Activated CD8-positive, alpha-beta T cell treated with anti-CD3 and anti-CD28 coated beads for 36 hours (primary cell): ENCODE measurements at regions of chr7 and their contacts with region 1.

Region 1: GRCh38 chr7:16564909-16565426 is 38.3 kb downstream of the LRRC72 start:
- DNase-seq: peak; percentile 46
- ATAC-seq: peak; percentile 68
- H3K4me3 Mint-ChIP-seq: no peak overlapping the region
- H3K27ac Mint-ChIP-seq: peak overlapping the region; percentile 55
- H3K4me1 Mint-ChIP-seq: peaks cover 21% of the 10 kb centered on the region
- H3K27me3 Mint-ChIP-seq: peaks cover 4% of the 10 kb centered on the region
- CTCF ChIP-seq: peak; percentile 79

Region 2: GRCh38 chr7:16078076-16078952 is 486.7 kb before region 1 on chr7:
- CTCF ChIA-PET with region 1: interaction called, 33 read pairs
- POLR2A ChIA-PET with region 1: interaction called, 3 read pairs
- intact Hi-C with region 1: loop called (anchors 2 kb)
- DNase-seq: peak; percentile 30
- ATAC-seq: no peak
- H3K4me3 Mint-ChIP-seq: no peak overlapping the region
- H3K27ac Mint-ChIP-seq: no peak overlapping the region
- H3K4me1 Mint-ChIP-seq: no peaks in the 10 kb centered on the region
- H3K27me3 Mint-ChIP-seq: no peaks in the 10 kb centered on the region
- CTCF ChIP-seq: peak; percentile 55

Region 3: DNA sequence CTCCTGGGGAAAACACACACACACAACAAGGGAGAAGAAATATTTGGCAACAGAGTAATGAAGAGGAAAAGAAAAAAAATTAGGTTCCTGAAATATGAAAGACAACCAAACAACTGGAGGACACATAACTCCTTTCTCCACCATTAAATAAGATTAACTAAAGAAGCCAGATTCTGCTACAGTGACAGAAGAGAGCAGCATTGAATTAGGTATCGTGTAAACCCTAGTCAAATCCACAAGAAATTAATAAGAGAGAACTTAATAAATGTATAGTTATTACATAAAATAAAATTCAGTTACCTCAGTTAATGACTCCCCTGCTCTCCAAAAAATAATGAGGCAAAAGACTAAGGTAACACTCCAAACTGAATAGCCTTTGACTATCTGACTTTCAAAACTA is 450.3 kb before region 1 on chr7:
- CTCF ChIA-PET with region 1: interaction called, 3 read pairs
- POLR2A ChIA-PET with region 1: no interaction called
- intact Hi-C with region 1: loop called (anchors 10 kb)
- DNase-seq: no peak
- ATAC-seq: no peak
- H3K4me3 Mint-ChIP-seq: no peak overlapping the region
- H3K27ac Mint-ChIP-seq: no peak overlapping the region
- H3K4me1 Mint-ChIP-seq: peaks cover 3% of the 10 kb centered on the region
- H3K27me3 Mint-ChIP-seq: no peaks in the 10 kb centered on the region
- CTCF ChIP-seq: no peak

Region 4: GRCh38 chr7:16420649-16421332 is 144.2 kb before region 1 on chr7:
- CTCF ChIA-PET with region 1: interaction called, 27 read pairs
- POLR2A ChIA-PET with region 1: interaction called, 9 read pairs
- intact Hi-C with region 1: no loop called
- DNase-seq: peak; percentile 91
- ATAC-seq: peak; percentile 91
- H3K4me3 Mint-ChIP-seq: peak overlapping the region; percentile 75
- H3K27ac Mint-ChIP-seq: peak overlapping the region; percentile 97
- H3K4me1 Mint-ChIP-seq: peaks cover 27% of the 10 kb centered on the region
- H3K27me3 Mint-ChIP-seq: no peaks in the 10 kb centered on the region
- CTCF ChIP-seq: peak; percentile 55

Region 5: DNA sequence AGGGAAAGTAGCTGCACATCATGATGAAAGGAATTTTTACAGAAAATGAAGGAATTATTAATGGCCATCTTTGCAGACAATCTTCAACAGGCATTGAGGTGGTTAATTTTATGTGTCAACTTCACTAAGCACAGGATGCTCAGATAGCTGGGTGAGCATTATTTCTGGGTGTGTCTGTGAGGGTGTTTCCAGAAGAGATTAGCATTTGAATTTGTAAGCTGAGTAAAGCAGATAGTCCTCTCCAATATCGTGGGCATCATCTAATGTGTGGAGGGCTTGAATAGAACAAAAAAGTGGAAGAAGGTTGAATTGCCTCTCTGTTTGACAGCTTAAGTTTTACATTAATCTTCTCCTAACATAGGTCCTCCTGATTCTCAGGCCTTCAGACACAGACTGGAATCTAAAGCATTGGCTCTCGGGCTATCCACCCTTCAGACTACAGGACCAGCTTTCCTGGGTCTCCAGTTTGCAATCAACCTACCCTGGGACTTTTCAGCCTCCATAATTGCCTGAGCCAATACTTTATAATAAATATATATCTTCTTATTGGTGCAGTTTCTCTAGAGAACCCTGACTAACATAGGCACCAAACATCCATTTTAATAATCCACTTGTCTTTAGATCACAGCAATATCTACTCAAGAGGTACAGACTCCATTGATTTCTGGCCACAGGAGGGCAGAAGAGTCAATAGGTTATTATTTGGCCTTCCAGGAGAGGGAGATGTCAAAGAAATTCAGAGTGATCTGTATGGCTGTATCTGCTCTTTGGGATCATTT is 133.1 kb before region 1 on chr7:
- CTCF ChIA-PET with region 1: interaction called, 63 read pairs
- POLR2A ChIA-PET with region 1: no interaction called
- intact Hi-C with region 1: loop called (anchors 1 kb)
- DNase-seq: peak; percentile 54
- ATAC-seq: peak; percentile 74
- H3K4me3 Mint-ChIP-seq: no peak overlapping the region
- H3K27ac Mint-ChIP-seq: no peak overlapping the region
- H3K4me1 Mint-ChIP-seq: no peaks in the 10 kb centered on the region
- H3K27me3 Mint-ChIP-seq: no peaks in the 10 kb centered on the region
- CTCF ChIP-seq: peak; percentile 52

Region 6: GRCh38 chr7:16548428-16548827 is 16.5 kb before region 1 on chr7:
- CTCF ChIA-PET with region 1: interaction called, 25 read pairs
- POLR2A ChIA-PET with region 1: no interaction called
- intact Hi-C with region 1: no loop called
- DNase-seq: no peak
- ATAC-seq: no peak
- H3K4me3 Mint-ChIP-seq: no peak overlapping the region
- H3K27ac Mint-ChIP-seq: no peak overlapping the region
- H3K4me1 Mint-ChIP-seq: no peaks in the 10 kb centered on the region
- H3K27me3 Mint-ChIP-seq: peaks cover 6% of the 10 kb centered on the region
- CTCF ChIP-seq: no peak

Region 7: GRCh38 chr7:16554518-16555236 is 10.3 kb before region 1 on chr7:
- CTCF ChIA-PET with region 1: interaction called, 25 read pairs
- POLR2A ChIA-PET with region 1: no interaction called
- intact Hi-C with region 1: no loop called
- DNase-seq: no peak
- ATAC-seq: no peak
- H3K4me3 Mint-ChIP-seq: no peak overlapping the region
- H3K27ac Mint-ChIP-seq: no peak overlapping the region
- H3K4me1 Mint-ChIP-seq: no peaks in the 10 kb centered on the region
- H3K27me3 Mint-ChIP-seq: peaks cover 5% of the 10 kb centered on the region
- CTCF ChIP-seq: no peak

Region 8: DNA sequence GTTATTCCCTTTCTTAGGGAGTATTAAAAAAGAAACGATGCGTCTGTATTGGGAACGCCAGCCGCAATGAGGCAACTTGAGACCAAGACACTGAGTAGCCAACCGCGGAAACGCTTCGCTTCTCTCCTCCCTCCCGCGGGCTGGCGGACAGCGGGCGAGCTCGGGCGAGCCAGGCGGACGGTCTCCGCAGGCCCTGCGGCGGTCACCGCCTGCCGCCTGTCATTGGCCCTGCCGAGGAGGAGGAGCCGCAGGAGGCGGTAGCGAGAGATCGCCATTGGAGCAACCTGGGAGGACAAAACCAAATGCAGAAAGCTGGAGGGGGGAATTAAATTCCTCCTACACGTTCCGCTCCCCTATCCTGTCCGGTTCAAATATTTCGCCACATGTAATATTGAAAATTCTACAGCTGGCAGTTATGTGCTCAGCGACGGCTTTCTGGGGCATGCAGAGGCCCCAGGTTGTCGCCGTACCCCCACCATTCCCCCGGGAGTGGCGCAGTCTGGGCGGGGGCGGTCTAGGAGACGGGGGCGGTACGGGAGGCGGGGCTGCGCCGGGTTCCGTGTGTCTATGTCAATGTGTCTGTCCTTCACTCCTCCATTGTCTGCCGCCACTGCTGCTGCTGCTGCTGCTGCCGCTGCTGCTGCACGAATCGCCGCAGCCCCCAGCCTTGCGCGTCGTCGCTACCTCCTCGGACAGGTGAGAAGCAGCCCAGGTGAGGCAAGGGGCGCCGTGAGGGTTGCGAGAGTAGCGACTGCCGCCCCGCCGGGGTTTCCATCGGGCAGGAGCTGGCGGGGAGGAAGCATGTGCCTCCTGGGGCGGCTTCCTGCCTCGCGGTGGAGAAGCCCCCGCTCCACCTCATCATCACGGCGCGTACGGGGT is 80.9 kb after region 1 on chr7 and contains the starts of genes ANKMY2 and BZW2:
- CTCF ChIA-PET with region 1: no interaction called
- POLR2A ChIA-PET with region 1: no interaction called
- intact Hi-C with region 1: no loop called
- DNase-seq: peak; percentile 93
- ATAC-seq: peak; percentile 91
- H3K4me3 Mint-ChIP-seq: peak within 1 kb of the TSS; percentile 93
- H3K27ac Mint-ChIP-seq: peak within 1 kb of the TSS; percentile 94
- H3K4me1 Mint-ChIP-seq: peaks cover 52% of the 10 kb centered on the region
- H3K27me3 Mint-ChIP-seq: no peaks in the 10 kb centered on the region
- CTCF ChIP-seq: no peak
- total RNA-seq, gene ANKMY2: 9.8 to 10.5 TPM
- total RNA-seq, gene BZW2: 120 to 123 TPM